ENCODE measurements at regions of chr10 and their contacts with region 1.

Region 1: DNA sequence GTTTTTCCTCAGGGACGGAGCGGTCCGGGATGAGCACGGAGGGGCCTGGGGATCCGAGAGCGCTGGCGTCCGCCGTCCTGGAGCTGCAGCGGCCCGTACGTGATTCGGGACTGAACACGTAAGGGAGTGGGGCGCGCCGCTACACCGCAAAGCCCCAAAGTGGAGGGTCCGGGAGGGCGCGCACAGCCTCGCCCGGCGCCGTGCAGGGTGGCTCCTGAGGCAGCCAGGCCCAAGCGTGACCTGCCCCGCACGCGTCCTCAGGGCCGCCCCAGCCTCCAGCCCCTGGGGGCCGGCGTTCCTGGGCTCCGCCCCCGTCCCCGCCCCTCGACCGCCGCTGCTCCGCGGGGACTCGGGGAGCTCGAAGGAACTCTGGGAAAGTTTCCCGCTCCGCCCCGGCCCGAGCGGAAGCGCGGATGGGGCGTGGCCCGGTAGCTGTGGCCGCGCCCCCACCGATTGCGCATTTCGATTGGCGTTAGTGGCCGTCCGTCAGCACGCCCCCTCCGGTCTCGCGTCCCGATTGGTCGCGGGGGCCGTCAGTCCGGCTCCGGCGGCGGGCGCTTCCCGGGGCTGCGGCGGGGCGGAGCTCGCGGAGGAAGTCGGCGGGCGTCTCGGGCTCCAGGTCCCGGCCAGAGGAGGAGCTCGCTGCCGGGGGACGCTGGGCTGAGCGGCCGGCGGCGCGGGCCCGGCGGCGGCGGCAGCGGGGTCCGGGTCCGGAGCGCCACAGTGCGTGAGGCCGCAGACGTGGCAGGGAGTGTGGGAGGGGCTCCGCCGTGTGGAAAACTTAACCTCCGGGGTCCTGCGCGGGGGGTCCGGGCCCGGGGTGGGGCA is at the starts of genes ANKRD16 and FBH1:
- DNase-seq: peak in 1 of 2 donors; percentile 98
- H3K4me3 ChIP-seq: peak within 1 kb of the TSS; percentile 96 to 97
- H3K27ac ChIP-seq: peak within 1 kb of the TSS; percentile 84
- H3K4me1 ChIP-seq: peaks cover 49% of the 10 kb centered on the region
- H3K27me3 ChIP-seq: no peaks in the 10 kb centered on the region
- CTCF ChIP-seq: no peak
- POLR2A ChIP-seq: peak in 1 of 2 donors; percentile 69
- total RNA-seq, gene ANKRD16: 17.7 TPM
- total RNA-seq, gene FBH1: 108 TPM

Region 2: GRCh38 chr10:5623081-5623748 is 266.6 kb before region 1 on chr10:
- intact Hi-C with region 1: no loop called
- DNase-seq: no peak
- H3K4me3 ChIP-seq: no peak overlapping the region
- H3K27ac ChIP-seq: peak overlapping the region; percentile 60
- H3K4me1 ChIP-seq: peaks cover 22% of the 10 kb centered on the region
- H3K27me3 ChIP-seq: no peaks in the 10 kb centered on the region
- CTCF ChIP-seq: peak; percentile 88 to 94 (median 91)
- POLR2A ChIP-seq: no peak

Region 3: DNA sequence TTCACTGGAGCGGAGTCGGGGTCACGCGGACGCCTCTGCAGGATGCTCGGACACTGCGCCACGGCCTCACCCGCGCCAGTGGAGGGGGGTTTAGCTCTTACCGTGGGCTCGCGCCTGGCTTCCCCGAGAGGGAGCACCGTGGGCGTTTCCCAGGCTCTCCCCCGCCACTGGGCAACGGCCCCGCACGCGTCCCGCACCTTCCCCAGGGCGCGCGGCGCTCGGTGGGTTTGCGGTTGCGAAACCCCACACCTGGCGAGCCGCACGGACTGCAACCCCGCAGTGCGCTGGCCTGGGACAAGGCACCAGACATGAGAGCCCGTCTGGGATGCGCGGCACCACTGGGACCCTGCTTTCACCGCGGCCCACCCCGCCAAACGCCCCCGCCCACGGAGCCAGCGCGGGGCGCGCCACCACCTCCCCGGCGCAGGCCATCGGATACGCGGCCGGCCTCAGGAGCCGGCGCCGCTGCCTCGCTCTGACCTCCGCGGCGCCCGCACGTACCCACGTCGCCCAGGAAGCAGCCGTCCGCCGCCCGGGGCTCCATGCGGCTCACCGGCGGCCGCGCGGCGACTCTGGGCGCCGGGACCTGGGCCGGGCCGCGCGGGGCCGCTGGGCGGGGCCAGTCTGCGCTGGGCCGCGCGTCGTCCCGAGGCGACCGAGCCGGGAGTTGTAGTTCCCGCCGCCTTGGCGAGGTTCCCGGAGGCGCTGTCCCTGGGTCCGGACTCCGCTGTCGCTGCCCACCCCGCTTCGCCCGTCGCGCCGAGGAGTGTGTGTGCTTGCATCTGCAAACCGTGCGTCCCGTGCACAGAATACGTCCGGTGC is 223.6 kb before region 1 on chr10 and contains the start of gene ASB13:
- intact Hi-C with region 1: loop called (anchors 10 kb)
- DNase-seq: peak in 1 of 2 donors; percentile 76
- H3K4me3 ChIP-seq: peak within 1 kb of the TSS; percentile 95 to 96
- H3K27ac ChIP-seq: peak within 1 kb of the TSS; percentile 84
- H3K4me1 ChIP-seq: peaks cover 35% of the 10 kb centered on the region
- H3K27me3 ChIP-seq: no peaks in the 10 kb centered on the region
- CTCF ChIP-seq: no peak
- POLR2A ChIP-seq: peak in 1 of 2 donors; percentile 51
- total RNA-seq, gene ASB13: 17.4 TPM